ENCODE measurements at regions of chr4 and their contacts with region 1.

Region 1: DNA sequence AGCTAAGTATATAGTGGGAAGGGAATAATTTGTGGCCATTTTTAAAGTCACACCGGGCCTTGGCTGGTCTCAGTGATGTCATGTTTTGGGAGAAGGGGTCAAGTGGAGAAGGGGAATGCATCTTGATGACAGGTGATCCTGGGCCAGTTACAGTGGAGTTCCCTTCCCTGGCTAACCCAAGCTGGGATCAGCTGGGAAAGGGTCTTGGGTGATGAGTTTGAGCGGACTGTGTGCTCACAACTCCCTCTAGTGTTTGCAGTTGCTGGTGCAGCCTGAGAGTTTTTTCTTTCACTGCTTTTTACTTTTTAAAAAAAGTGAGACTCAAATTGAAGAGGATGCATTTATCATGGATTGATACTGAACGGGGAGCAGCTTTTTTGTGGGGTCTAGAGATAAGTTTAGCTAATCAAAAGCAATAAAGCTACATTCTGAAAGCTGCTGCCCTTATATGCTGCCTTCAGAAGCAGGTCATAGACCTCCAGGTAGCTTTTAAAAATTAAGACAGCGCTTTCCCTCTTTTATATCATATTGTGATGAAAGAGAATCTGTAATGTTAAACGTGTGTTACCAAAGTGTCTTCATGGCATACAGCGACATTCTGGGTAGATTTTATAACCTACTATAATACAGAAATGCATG is 164.7 kb downstream of the DCLK2 start:
- DNase-seq: peak; percentile 67
- H3K4me3 ChIP-seq: no peak overlapping the region
- H3K27ac ChIP-seq: no peak overlapping the region
- H3K4me1 ChIP-seq: peaks cover 8% of the 10 kb centered on the region
- H3K27me3 ChIP-seq: no peaks in the 10 kb centered on the region
- CTCF ChIP-seq: peak; percentile 87 to 89
- POLR2A ChIP-seq: no peak

Region 2: GRCh38 chr4:149914119-149915115 is 328.5 kb before region 1 on chr4:
- CTCF ChIA-PET with region 1: interaction called, 4 read pairs
- POLR2A ChIA-PET with region 1: no interaction called
- dilution Hi-C with region 1: no loop called
- intact Hi-C with region 1: loop called (anchors 2 kb)
- DNase-seq: peak; percentile 65
- H3K4me3 ChIP-seq: no peak overlapping the region
- H3K27ac ChIP-seq: no peak overlapping the region
- H3K4me1 ChIP-seq: peaks cover 11% of the 10 kb centered on the region
- H3K27me3 ChIP-seq: no peaks in the 10 kb centered on the region
- CTCF ChIP-seq: peak; percentile 70 to 79
- POLR2A ChIP-seq: no peak

Region 3: DNA sequence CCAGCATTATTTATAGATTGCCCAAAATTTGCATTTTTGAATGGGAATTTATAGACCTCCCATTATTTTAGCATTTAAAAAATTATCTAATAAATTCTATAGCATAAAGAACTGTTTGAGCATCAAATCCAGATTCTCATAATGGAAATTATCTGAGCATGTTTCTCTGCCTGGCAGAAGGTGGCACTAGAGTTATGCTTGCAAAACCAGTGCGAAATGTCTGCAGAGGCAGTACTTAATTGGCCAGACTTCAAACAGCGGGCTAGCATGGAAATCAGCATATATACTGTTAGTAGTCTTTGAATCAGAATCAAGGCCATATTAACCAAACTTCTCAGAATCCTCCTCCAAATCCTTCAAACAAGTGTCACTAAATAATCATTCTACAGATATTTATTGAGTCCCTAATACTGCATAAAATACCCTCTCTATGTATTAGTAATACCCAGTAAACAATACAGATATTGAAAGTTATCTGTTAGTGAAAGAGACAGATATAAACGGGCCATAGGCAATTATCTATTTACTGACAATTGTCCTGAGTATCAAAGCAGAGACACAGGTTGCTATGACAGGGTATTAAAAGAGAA is 243.4 kb before region 1 on chr4:
- CTCF ChIA-PET with region 1: interaction called, 133 read pairs
- POLR2A ChIA-PET with region 1: no interaction called
- dilution Hi-C with region 1: no loop called
- intact Hi-C with region 1: loop called (anchors 1 kb)
- DNase-seq: peak; percentile 70
- H3K4me3 ChIP-seq: no peak overlapping the region
- H3K27ac ChIP-seq: no peak overlapping the region
- H3K4me1 ChIP-seq: no peaks in the 10 kb centered on the region
- H3K27me3 ChIP-seq: no peaks in the 10 kb centered on the region
- CTCF ChIP-seq: peak; percentile 59 to 61
- POLR2A ChIP-seq: no peak

Region 4: DNA sequence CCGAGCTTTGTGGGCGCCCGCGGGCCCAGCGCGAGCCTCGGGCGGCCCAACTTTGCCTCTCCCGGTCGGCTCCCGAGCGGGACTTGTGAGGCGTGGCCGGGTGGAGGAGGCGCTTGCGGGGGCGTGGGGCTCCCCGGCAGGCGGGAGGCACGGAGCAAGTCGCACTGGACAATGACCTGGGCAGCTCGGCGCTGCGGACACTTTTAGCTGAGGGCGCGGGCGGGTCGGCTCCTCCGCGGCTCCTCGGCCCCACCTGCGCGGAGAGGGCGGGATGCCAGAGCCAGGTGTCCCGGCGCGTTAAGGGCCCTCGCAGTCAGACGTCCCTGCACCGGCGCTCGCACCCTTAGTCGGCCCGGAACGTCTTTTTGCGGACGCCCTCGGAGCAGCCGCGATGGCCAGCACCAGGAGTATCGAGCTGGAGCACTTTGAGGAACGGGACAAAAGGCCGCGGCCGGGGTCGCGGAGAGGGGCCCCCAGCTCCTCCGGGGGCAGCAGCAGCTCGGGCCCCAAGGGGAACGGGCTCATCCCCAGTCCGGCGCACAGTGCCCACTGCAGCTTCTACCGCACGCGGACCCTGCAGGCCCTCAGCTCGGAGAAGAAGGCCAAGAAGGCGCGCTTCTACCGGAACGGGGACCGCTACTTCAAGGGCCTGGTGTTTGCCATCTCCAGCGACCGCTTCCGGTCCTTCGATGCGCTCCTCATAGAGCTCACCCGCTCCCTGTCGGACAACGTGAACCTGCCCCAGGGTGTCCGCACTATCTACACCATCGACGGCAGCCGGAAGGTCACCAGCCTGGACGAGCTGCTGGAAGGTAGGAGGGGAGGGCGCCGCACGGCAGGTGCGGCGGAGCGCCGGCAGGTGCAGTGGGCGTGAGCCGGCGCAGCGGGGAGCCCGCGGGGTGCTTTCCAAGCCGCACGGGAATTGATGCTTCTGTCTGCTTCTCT is 164.0 kb before region 1 on chr4:
- CTCF ChIA-PET with region 1: interaction called, 14 read pairs
- POLR2A ChIA-PET with region 1: no interaction called
- dilution Hi-C with region 1: no loop called
- intact Hi-C with region 1: loop called (anchors 1 kb)
- DNase-seq: peak; percentile 57
- H3K4me3 ChIP-seq: peak overlapping the region; percentile 47 to 65 (median 59)
- H3K27ac ChIP-seq: peak overlapping the region; percentile 35
- H3K4me1 ChIP-seq: peaks cover 9% of the 10 kb centered on the region
- H3K27me3 ChIP-seq: no peaks in the 10 kb centered on the region
- CTCF ChIP-seq: no peak
- POLR2A ChIP-seq: no peak

Region 5: GRCh38 chr4:150224896-150225591 is 17.9 kb before region 1 on chr4:
- CTCF ChIA-PET with region 1: interaction called, 40 read pairs
- POLR2A ChIA-PET with region 1: no interaction called
- dilution Hi-C with region 1: no loop called
- intact Hi-C with region 1: no loop called
- DNase-seq: no peak
- H3K4me3 ChIP-seq: no peak overlapping the region
- H3K27ac ChIP-seq: no peak overlapping the region
- H3K4me1 ChIP-seq: peaks cover 12% of the 10 kb centered on the region
- H3K27me3 ChIP-seq: no peaks in the 10 kb centered on the region
- CTCF ChIP-seq: no peak
- POLR2A ChIP-seq: no peak

Region 6: GRCh38 chr4:150348079-150348478 is 105.1 kb after region 1 on chr4:
- CTCF ChIA-PET with region 1: no interaction called
- POLR2A ChIA-PET with region 1: no interaction called
- dilution Hi-C with region 1: no loop called
- intact Hi-C with region 1: no loop called
- DNase-seq: peak; percentile 86
- H3K4me3 ChIP-seq: no peak overlapping the region
- H3K27ac ChIP-seq: peak overlapping the region; percentile 45
- H3K4me1 ChIP-seq: peaks cover 9% of the 10 kb centered on the region
- H3K27me3 ChIP-seq: no peaks in the 10 kb centered on the region
- CTCF ChIP-seq: no peak
- POLR2A ChIP-seq: no peak

Measured in endothelial cell of umbilical vein (primary cell).